PC-3 (cell line): ENCODE measurements at regions of chr12 and their contacts with region 1.

Region 1: DNA sequence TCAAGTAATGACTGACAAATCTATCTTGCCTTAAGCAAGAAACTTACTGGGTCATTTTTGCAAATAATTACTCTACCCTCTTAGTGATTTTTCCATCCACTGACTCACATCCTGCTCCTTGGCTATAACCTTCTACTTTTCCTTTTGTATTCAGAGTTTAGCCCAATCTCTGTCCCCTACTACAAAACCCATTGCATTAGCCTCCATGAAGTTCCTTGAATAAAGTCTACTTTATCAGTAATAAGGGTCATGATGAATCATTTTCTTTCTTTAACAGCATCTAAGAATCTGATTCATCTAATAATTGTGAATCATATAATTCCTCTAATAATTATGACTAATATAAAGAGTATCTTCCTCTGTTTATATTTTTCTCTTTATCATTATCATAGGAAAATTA is 132.6 kb downstream of the NTS start:
- DNase-seq: peak; percentile 54
- ATAC-seq: peak; percentile 91
- H3K4me3 ChIP-seq: no peak overlapping the region
- H3K27ac ChIP-seq: peak overlapping the region; percentile 13; the same call in 1 of the 2 replicates
- H3K4me1 ChIP-seq: peaks cover 9% of the 10 kb centered on the region; the same call in 1 of the 2 replicates
- H3K27me3 ChIP-seq: no peaks in the 10 kb centered on the region
- CTCF ChIP-seq: no peak

Region 2: GRCh38 chr12:85996280-85996679 is 10.4 kb before region 1 on chr12:
- CTCF ChIA-PET with region 1: no interaction called
- POLR2A ChIA-PET with region 1: no interaction called
- intact Hi-C with region 1: loop called (anchors 1 kb)
- DNase-seq: peak; percentile 62
- ATAC-seq: peak; percentile 91
- H3K4me3 ChIP-seq: no peak overlapping the region
- H3K27ac ChIP-seq: no peak overlapping the region
- H3K4me1 ChIP-seq: peaks cover 7% of the 10 kb centered on the region
- H3K27me3 ChIP-seq: no peaks in the 10 kb centered on the region
- CTCF ChIP-seq: no peak

Region 3: GRCh38 chr12:86137916-86138315 is 131.2 kb after region 1 on chr12:
- CTCF ChIA-PET with region 1: no interaction called
- POLR2A ChIA-PET with region 1: no interaction called
- intact Hi-C with region 1: loop called (anchors 10 kb)
- DNase-seq: peak; percentile 79
- ATAC-seq: peak; percentile 84
- H3K4me3 ChIP-seq: no peak overlapping the region; the same call in 1 of the 2 replicates
- H3K27ac ChIP-seq: peak overlapping the region; percentile 72
- H3K4me1 ChIP-seq: peaks cover 20% of the 10 kb centered on the region
- H3K27me3 ChIP-seq: no peaks in the 10 kb centered on the region
- CTCF ChIP-seq: no peak